ENCODE measurements at regions of chr17 and their contacts with region 1.

Region 1: GRCh38 chr17:27654654-27655524 is 23.9 kb downstream of the LGALS9 start:
- DNase-seq: peak; percentile 55 to 71
- H3K4me3 ChIP-seq: no peak overlapping the region
- H3K27ac ChIP-seq: no peak overlapping the region
- H3K4me1 ChIP-seq: no peaks in the 10 kb centered on the region
- H3K27me3 ChIP-seq: peaks cover under 1% of the 10 kb centered on the region; the same call in 1 of the 2 replicates
- CTCF ChIP-seq: peak; percentile 96

Region 2: DNA sequence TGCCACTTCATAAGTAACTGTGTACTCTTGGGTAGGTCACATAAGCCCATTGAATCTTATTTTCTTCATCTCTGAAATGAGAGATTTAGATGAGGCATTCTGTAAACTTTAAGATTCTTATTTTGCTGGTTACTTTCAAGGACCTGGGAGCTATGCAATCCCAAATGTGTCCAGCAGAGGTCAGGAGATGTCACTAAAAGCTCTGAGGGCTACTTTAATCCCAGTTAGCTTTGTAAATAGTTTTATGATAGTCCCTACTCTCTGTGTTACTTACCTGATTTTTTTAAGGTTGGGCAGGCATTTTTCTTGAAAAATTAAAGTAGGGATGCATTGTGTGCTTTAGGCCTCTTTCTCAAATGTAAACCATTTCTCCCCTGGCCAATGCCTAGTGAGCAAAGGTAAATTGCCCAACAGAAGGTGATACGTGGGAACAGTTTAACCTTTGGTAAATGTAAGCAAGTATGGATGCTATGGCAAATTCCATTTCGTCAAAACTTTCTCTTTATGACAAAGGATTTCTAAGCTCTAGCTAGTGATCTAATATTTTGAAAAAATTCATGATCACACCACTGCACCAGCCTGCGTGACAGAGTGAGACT is 418.1 kb before region 1 on chr17:
- CTCF ChIA-PET with region 1: interaction called, 5 read pairs
- POLR2A ChIA-PET with region 1: no interaction called
- intact Hi-C with region 1: loop called (anchors 5 kb)
- DNase-seq: peak; percentile 61 to 68
- H3K4me3 ChIP-seq: no peak overlapping the region
- H3K27ac ChIP-seq: no peak overlapping the region
- H3K4me1 ChIP-seq: peaks cover 34% of the 10 kb centered on the region
- H3K27me3 ChIP-seq: no peaks in the 10 kb centered on the region
- CTCF ChIP-seq: peak; percentile 93

Region 3: GRCh38 chr17:27559506-27560481 is 95.1 kb before region 1 on chr17:
- CTCF ChIA-PET with region 1: no interaction called
- POLR2A ChIA-PET with region 1: no interaction called
- intact Hi-C with region 1: no loop called
- DNase-seq: no peak
- H3K4me3 ChIP-seq: no peak overlapping the region
- H3K27ac ChIP-seq: no peak overlapping the region
- H3K4me1 ChIP-seq: no peaks in the 10 kb centered on the region
- H3K27me3 ChIP-seq: no peaks in the 10 kb centered on the region
- CTCF ChIP-seq: no peak

Region 4: DNA sequence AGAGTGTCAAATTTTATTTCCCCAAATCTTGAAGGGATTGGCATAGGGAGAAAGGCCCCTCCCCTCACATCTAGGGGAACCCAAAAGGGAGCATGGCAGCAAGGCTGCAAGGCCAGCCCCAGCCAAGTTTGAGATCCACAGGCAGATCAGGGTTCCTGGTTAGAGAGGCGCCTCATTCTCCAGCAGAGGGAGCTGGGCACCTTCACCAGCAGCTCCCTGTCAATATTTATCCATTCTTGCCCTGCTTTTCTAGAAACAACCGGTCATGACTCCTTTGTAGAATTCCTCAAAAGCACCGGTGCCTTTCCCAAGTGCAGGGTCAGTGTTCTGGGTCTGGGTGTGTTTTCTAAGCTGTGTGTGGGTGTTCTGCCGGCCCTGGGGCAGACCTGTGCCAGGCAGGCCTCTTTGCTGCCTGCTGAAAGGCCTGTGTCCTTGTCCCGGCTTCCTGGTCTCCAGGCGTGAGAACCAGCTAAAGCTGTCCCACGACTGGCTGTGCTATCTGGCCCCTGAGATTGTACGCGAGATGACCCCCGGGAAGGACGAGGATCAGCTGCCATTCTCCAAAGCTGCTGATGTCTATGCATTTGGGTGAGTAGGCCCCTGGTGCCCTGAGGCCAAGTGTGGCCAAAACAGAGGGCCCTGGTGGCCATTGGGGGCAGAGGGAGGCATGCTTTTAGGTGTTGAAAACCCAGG is 45.1 kb before region 1 on chr17:
- CTCF ChIA-PET with region 1: no interaction called
- POLR2A ChIA-PET with region 1: no interaction called
- intact Hi-C with region 1: loop called (anchors 1 kb)
- DNase-seq: peak in 1 of 2 experiments; percentile 25
- H3K4me3 ChIP-seq: no peak overlapping the region
- H3K27ac ChIP-seq: no peak overlapping the region
- H3K4me1 ChIP-seq: peaks cover 1% of the 10 kb centered on the region
- H3K27me3 ChIP-seq: no peaks in the 10 kb centered on the region
- CTCF ChIP-seq: peak; percentile 69

Region 5: GRCh38 chr17:27760069-27760885 is 105.4 kb after region 1 on chr17:
- CTCF ChIA-PET with region 1: interaction called, 6 read pairs
- POLR2A ChIA-PET with region 1: no interaction called
- intact Hi-C with region 1: loop called (anchors 1 kb)
- DNase-seq: peak in 1 of 2 experiments; percentile 63
- H3K4me3 ChIP-seq: no peak overlapping the region
- H3K27ac ChIP-seq: no peak overlapping the region
- H3K4me1 ChIP-seq: no peaks in the 10 kb centered on the region
- H3K27me3 ChIP-seq: peaks cover 35% of the 10 kb centered on the region
- CTCF ChIP-seq: peak; percentile 95

Region 6: GRCh38 chr17:27879987-27880608 is 225.2 kb after region 1 on chr17:
- CTCF ChIA-PET with region 1: interaction called, 5 read pairs
- POLR2A ChIA-PET with region 1: no interaction called
- intact Hi-C with region 1: loop called (anchors 1 kb)
- DNase-seq: peak; percentile 53 to 67
- H3K4me3 ChIP-seq: no peak overlapping the region
- H3K27ac ChIP-seq: no peak overlapping the region
- H3K4me1 ChIP-seq: no peaks in the 10 kb centered on the region
- H3K27me3 ChIP-seq: no peaks in the 10 kb centered on the region
- CTCF ChIP-seq: peak; percentile 88